HEK293 (cell line): ENCODE measurements at regions of chr1 and their contacts with region 1.

Region 1: GRCh38 chr1:152001391-152002249 is 8.0 kb upstream of the S100A10 start:
- H3K4me3 ChIP-seq: no peak overlapping the region
- H3K27ac ChIP-seq: no peak overlapping the region
- H3K4me1 ChIP-seq: no peaks in the 10 kb centered on the region
- CTCF ChIP-seq: peak; percentile 73; the same call in 1 of the 2 replicates

Region 2: DNA sequence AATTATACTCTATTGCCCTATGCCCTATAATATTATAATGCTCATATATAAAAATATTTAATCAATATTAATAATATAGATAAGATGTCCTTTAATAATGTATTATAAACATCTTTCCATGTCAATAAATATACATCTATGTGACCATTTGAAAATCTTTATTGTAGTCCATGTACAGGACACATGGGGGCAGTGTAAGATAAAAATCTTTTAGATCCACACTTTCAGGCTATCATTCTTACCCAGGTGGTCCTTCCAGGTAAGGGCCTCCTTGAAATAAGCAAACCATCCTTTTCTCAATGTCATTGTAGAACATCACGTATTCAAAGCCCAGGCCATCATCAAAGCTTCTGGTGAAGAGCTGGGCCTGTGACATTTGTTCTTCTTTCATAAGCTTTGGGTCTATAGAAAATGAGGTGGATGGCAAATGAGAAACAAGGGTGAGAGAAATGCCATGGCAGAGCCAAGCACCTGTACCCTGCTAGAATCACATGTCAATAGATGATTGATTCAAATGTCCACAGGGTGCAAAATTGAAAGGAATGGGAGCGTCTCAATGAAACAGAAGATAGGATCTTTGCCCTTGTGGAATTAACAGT is 112.5 kb before region 1 on chr1:
- CTCF ChIA-PET with region 1: interaction called, 67 read pairs
- POLR2A ChIA-PET with region 1: no interaction called
- H3K4me3 ChIP-seq: no peak overlapping the region
- H3K27ac ChIP-seq: no peak overlapping the region
- H3K4me1 ChIP-seq: no peaks in the 10 kb centered on the region
- CTCF ChIP-seq: no peak

Region 3: DNA sequence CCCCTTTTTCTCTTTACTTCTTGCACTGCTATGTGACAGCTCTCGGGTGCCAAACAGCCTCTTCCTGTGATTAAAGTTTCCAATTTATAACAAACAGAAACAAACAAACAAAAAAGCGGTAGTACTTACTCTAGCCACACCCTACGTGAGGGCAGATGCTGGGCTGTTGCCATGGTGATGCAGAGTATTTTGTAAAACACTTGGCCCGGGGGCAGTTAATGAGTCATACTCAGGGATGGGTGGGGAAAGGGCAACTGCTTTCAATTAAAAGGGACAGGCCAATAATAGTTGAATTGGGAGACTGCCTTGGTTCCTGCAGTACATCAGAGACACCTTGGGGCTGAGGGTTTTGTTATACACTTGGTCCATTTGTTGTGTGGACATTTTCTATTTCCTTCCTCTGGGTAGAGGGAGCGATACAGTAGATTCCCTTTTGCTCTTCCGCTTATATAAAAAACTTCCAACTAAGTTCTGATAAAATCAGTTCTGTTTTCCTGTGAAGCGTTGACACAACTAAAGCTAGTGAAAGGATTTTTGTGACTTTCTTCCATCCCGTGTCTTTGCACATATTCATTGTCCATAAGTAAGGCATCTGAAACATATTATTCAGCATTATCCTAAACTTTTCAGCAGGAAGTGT is 55.8 kb before region 1 on chr1:
- CTCF ChIA-PET with region 1: interaction called, 301 read pairs
- POLR2A ChIA-PET with region 1: interaction called, 3 read pairs
- H3K4me3 ChIP-seq: no peak overlapping the region
- H3K27ac ChIP-seq: no peak overlapping the region
- H3K4me1 ChIP-seq: peaks cover 15% of the 10 kb centered on the region
- CTCF ChIP-seq: no peak

Region 4: DNA sequence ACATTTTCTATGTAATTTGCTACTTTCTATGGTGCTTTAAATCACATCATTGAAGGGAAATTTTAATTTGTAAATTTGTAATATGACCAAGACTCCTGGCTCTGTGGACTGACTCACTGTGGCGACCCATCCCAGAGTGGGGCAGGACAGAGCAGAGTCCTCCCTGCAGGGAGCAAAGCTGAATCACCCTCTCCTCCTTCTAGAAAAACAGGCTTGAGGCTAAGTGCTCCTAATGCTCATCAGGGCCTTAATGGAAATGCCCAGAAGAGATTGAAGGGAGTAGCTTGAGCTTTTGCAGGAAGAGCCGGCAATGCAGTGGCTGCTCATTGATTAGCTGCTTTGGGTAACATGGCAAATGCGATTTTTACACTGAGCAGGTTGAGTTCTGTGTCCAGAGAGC is 24.8 kb before region 1 on chr1:
- CTCF ChIA-PET with region 1: interaction called, 409 read pairs
- POLR2A ChIA-PET with region 1: no interaction called
- H3K4me3 ChIP-seq: no peak overlapping the region
- H3K27ac ChIP-seq: no peak overlapping the region
- H3K4me1 ChIP-seq: peaks cover 25% of the 10 kb centered on the region
- CTCF ChIP-seq: no peak

Region 5: DNA sequence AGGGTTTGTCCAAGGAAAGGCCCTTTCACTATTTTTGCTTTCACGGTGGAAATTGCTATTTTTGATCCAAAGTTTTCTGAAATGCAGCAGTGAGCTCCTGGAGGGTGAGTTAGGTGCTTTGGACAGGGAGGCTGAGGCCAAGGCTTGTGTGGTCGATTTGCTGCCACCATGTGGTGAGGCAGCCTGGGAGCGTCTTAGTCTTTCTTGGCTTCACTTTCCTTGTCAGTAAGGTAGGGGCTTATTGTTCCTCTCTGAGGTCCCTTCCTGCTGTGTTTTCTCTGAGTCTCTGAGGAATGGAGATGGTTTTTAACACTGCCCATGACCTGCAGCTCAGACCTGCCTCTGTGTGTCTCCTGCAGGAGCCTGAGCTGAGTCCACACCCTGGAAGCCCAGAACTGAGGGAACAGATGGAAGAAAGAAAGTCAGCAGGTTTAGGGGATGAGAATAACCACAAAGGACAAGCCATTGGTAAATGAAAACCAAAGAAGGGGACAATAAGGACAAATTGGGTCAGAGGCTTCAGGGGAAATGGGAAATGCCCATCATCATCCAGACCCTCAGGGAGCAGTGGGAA is 12.1 kb after region 1 on chr1:
- CTCF ChIA-PET with region 1: interaction called, 85 read pairs
- POLR2A ChIA-PET with region 1: no interaction called
- H3K4me3 ChIP-seq: no peak overlapping the region
- H3K27ac ChIP-seq: no peak overlapping the region
- H3K4me1 ChIP-seq: no peaks in the 10 kb centered on the region
- CTCF ChIP-seq: peak; percentile 51; the same call in 1 of the 2 replicates

Region 6: GRCh38 chr1:152071123-152071522 is 69.5 kb after region 1 on chr1:
- CTCF ChIA-PET with region 1: no interaction called
- POLR2A ChIA-PET with region 1: no interaction called
- H3K4me3 ChIP-seq: no peak overlapping the region
- H3K27ac ChIP-seq: no peak overlapping the region
- H3K4me1 ChIP-seq: no peaks in the 10 kb centered on the region
- CTCF ChIP-seq: no peak

Region 7: GRCh38 chr1:152096121-152096865 is 94.7 kb after region 1 on chr1:
- CTCF ChIA-PET with region 1: no interaction called
- POLR2A ChIA-PET with region 1: no interaction called
- H3K4me3 ChIP-seq: no peak overlapping the region
- H3K27ac ChIP-seq: no peak overlapping the region
- H3K4me1 ChIP-seq: no peaks in the 10 kb centered on the region
- CTCF ChIP-seq: no peak